ENCODE measurements at regions of chr16 and their contacts with region 1.

Region 1: GRCh38 chr16:81366316-81366932 is 51.7 kb downstream of the GAN start:
- DNase-seq: no peak
- H3K4me3 Mint-ChIP-seq: no peak overlapping the region
- H3K27ac Mint-ChIP-seq: no peak overlapping the region
- H3K4me1 Mint-ChIP-seq: peaks cover 11% of the 10 kb centered on the region
- H3K27me3 Mint-ChIP-seq: no peaks in the 10 kb centered on the region

Region 2: DNA sequence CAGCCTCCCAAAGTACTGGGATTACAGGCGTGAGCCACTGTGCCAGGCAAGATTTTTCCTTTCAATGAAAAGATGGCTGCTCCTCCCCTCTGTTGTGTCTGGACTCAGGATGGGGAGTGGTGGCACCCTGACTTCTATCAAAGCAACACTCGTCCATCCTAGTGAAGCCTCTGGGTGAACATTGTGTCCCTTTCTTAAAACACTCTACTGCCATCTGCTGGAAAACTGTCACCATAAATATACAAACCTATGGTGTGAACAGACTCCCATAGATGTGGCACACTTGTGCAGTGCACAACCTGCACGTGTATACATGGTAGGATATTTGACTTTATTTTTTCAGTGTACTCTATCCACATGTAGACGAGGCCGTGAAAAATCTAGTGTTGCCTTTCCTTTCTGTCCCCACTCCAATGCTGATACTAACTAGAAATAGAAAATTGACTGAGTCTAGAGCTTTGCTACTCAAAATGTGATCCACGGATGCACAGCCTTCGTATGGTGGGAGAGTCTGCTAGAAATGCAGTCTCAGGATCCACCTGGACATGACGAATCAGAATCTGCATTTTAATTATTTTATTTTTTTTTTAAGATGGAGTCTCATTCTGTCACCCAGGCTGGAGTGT is 356.8 kb after region 1 on chr16:
- CTCF ChIA-PET with region 1: interaction called, 25 read pairs
- POLR2A ChIA-PET with region 1: interaction called, 4 read pairs
- DNase-seq: peak; percentile 35
- H3K4me3 Mint-ChIP-seq: no peak overlapping the region
- H3K27ac Mint-ChIP-seq: peak overlapping the region; percentile 63
- H3K4me1 Mint-ChIP-seq: peaks cover 25% of the 10 kb centered on the region
- H3K27me3 Mint-ChIP-seq: no peaks in the 10 kb centered on the region

Region 3: DNA sequence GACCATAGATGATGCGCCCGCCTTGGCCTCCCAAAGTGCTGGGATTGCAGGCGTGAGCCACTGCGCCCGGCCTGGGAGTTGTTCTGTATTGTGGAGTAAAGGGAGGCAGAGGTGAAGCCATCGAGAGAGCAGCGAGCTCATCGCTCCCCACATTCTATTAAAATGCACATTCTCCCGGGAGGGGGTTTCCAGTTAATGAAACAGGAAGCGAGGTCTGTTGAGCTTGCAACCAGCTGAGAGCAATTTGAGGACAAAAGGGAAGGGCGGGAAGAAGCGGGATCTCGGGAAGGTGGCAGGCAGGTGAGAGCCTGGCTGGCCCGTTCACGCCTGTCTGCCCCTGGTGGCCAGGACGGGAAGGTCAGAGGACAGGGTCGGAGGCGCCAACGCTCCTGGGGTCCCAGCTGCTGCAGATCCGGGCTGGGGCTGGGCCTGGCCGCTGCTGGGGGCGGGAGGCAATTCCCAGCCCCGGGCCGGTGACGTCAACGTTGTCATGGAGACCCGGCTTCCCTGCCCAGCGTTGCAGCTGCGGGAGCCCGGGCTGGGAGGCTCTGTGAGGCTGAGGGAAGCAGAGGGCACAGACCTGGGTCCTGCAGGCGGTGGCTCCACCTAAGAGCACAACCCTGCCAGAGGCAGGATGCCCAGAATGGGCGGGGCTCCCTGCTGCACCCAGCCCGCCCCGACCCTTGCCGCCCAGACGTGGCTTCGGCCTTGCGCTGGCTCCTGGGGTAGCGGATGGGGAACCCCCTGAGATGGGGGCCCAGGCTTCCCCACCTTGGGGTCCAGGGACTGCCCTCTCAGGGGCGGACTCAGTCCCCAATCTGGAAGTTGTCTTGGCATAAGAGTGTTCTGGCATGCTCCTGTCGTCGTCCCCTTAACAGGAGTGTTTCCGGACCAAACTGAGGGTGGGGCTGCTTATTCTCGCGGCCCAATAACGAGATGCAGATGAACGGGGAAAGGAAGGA is 363.9 kb after region 1 on chr16:
- CTCF ChIA-PET with region 1: interaction called, 25 read pairs
- POLR2A ChIA-PET with region 1: no interaction called
- DNase-seq: peak; percentile 64
- H3K4me3 Mint-ChIP-seq: peak overlapping the region; percentile 68
- H3K27ac Mint-ChIP-seq: peak overlapping the region; percentile 86
- H3K4me1 Mint-ChIP-seq: peaks cover 25% of the 10 kb centered on the region
- H3K27me3 Mint-ChIP-seq: no peaks in the 10 kb centered on the region

Region 4: DNA sequence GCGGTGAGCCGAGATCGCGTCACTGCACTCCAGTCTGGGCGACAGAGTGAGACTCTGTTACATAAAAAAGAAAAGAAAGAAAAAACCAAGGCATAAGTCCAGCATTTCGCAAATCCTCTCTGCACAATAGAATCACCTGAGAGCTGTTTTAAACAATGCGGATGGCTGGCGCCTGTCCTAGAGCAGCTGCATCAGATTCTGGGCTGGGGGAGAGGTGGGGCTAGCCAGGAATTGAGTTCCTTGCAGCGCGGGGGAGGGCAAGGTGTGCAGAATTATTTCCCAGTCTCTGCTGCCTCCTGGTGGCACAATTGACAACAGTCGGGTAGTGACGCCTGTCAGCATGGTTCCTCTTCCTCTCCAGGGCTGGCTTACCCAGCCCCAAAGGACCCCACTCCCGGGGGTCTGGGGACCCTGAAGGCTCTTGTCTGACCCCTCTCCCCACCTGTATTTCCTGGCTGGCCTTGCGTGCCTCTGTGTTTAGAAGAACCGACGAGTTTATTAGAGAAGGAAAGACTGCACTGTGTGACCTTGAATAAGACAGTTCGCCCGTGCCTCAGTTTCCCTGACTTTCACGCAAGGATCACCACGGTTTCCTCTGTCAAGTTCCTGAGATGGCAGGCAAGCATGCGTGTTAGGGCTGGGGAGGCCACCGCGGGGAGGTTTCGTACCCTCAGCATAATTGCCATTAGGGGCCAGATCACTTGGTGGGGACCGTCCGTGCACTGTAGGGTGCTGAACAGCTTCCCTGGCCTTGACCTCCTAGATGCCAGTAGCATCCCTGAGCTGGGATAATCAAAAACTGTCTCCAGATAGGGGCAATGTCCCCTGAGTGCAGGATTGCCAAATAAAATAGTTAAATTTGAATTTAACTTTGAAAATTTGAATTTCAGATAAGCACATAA is 371.7 kb after region 1 on chr16:
- CTCF ChIA-PET with region 1: interaction called, 12 read pairs
- POLR2A ChIA-PET with region 1: no interaction called
- DNase-seq: peak; percentile 89
- H3K4me3 Mint-ChIP-seq: peak overlapping the region; percentile 58
- H3K27ac Mint-ChIP-seq: no peak overlapping the region
- H3K4me1 Mint-ChIP-seq: peaks cover 24% of the 10 kb centered on the region
- H3K27me3 Mint-ChIP-seq: no peaks in the 10 kb centered on the region

Measured in activated CD4-positive, alpha-beta memory T cell treated with anti-CD3 and anti-CD28 coated beads, Interleukin-2, amount 10 ng/mL, durations not matched to agents 7 days and 5 days (primary cell).